Calu3 (cell line): ENCODE measurements at regions of chr11 and their contacts with region 1.

Region 1: DNA sequence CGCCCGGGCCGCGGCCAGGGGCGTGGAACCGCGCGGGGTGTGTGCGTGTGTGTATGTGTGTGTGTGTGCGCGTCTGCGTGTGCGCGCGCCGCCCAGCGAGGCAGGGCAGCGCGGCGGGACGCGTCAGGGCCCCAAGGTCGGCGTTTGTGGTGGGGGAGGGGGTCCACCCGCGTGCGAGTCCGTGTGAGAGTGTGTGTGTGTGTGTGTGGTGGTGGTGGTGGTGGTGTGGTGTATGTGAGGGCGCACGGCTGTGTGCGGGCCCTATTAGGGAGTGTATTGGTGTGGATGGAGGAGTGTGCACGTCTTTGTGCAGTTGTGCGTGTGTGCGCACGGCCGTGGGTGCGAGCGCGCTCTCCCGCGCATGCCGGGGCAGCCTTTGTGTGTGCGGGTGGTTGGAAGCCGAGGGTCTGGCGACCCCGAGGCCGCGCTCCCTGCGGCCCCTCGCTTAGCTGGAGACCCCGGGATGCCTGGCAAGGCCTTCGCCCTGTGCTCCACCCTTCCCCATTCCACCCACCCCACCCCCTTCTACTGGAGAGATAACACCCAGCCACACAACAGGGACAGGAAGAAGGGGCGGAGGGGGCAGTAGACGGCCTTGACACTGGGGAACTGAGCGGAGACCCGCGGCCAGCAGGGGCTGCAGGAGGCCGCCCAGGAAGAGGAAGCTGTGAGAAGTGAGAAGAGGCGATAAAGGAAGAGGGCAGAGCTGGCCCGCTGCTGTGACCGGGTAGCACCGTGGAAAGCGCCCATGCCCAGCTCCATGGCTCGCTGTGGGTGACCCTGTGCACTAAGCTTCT is 528 bp upstream of the ARRB1 start:
- DNase-seq: peak; percentile 33
- H3K4me3 Mint-ChIP-seq: peak overlapping the region; percentile 88
- H3K27ac Mint-ChIP-seq: no peak overlapping the region
- H3K4me1 Mint-ChIP-seq: peaks cover 47% of the 10 kb centered on the region
- H3K27me3 Mint-ChIP-seq: peaks cover 25% of the 10 kb centered on the region
- CTCF ChIP-seq: no peak

Region 2: DNA sequence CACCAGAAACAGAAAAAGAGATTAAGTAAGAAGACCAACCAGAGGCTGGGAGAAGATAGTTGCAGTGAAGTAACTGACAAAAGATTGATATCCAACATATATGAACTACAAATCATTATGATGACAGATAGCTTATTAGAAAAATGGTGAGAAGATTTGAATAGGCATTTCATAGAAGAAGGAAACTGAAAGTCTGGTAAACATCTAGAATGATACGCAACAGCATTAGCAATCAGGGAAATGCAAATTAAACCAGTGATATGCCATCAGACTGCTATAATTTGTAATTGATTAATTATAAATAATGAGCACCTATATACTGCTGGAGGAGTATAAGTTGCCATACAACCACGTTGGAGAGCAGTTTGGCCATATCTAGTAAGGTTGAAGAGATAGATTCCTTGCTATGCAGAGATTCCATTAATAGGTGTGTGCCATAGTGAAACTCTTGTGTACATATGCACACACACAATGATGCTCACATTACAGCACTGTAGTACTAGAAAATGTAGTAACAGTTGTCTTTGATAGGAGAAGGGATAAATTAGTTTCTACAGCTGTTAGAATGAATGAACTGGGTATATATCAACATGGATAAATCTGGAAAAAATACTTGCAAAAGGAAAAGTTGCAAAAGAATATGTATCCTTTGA is 582.8 kb before region 1 on chr11:
- CTCF ChIA-PET with region 1: interaction called, 11 read pairs
- intact Hi-C with region 1: no loop called
- DNase-seq: no peak
- H3K4me3 Mint-ChIP-seq: no peak overlapping the region
- H3K27ac Mint-ChIP-seq: no peak overlapping the region
- H3K4me1 Mint-ChIP-seq: peaks cover 21% of the 10 kb centered on the region
- H3K27me3 Mint-ChIP-seq: no peaks in the 10 kb centered on the region
- CTCF ChIP-seq: no peak